ENCODE measurements at regions of chr3 and their contacts with region 1.

Region 1: GRCh38 chr3:20039766-20040475 is at the start of gene KAT2B:
- DNase-seq: peak; percentile 79 to 93 (median 91)
- ATAC-seq: peak; percentile 83
- H3K4me3 ChIP-seq: peak within 1 kb of the TSS; percentile 96
- H3K27ac ChIP-seq: peak within 1 kb of the TSS; percentile 95
- H3K4me1 ChIP-seq: peaks cover 7% of the 10 kb centered on the region
- H3K27me3 ChIP-seq: no peaks in the 10 kb centered on the region
- total RNA-seq, gene KAT2B: 58.2 to 71.5 (median 71.1) TPM

Region 2: GRCh38 chr3:19866751-19867347 is 173.1 kb before region 1 on chr3:
- intact Hi-C with region 1: no loop called
- DNase-seq: no peak
- ATAC-seq: peak; percentile 22 to 50
- H3K4me3 ChIP-seq: no peak overlapping the region
- H3K27ac ChIP-seq: no peak overlapping the region
- H3K4me1 ChIP-seq: no peaks in the 10 kb centered on the region
- H3K27me3 ChIP-seq: no peaks in the 10 kb centered on the region

Region 3: GRCh38 chr3:19946832-19947548 is 92.9 kb before region 1 on chr3 and contains the start of gene RAB5A:
- intact Hi-C with region 1: loop called in 2 of 4 experiments (anchors 5 to 10 kb)
- DNase-seq: peak; percentile 98 to 99 (median 99)
- ATAC-seq: peak; percentile 99
- H3K4me3 ChIP-seq: peak within 1 kb of the TSS; percentile 84
- H3K27ac ChIP-seq: peak within 1 kb of the TSS; percentile 92
- H3K4me1 ChIP-seq: no peaks in the 10 kb centered on the region
- H3K27me3 ChIP-seq: no peaks in the 10 kb centered on the region
- total RNA-seq, gene RAB5A: 45.2 to 71.3 (median 47.9) TPM

Region 4: DNA sequence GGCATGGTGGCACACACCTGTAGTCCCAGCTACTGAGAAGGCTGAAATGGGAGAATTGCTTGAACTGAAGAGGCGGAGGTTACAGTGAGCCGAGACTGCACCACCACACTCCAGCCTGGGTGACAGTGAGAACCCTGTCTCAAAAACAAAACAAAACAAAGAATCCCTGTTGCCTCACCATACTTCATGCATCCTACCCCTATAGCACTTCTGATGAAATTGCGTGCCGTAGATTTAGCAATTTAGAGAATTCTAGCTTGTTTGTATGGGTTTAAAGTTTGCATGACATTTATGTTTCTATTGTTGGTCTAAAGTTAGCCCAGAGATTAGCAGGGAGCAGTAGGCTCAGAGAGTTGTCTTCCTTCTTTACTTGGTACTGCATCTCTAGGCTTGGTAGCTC is 85.2 kb before region 1 on chr3:
- intact Hi-C with region 1: loop called in 2 of 4 experiments (anchors 5 to 10 kb)
- DNase-seq: no peak
- ATAC-seq: no peak
- H3K4me3 ChIP-seq: no peak overlapping the region
- H3K27ac ChIP-seq: no peak overlapping the region
- H3K4me1 ChIP-seq: peaks cover 8% of the 10 kb centered on the region
- H3K27me3 ChIP-seq: no peaks in the 10 kb centered on the region

Region 5: GRCh38 chr3:20185701-20186598 is 146.0 kb after region 1 on chr3 and contains the start of gene SGO1:
- intact Hi-C with region 1: loop called in 2 of 4 experiments (anchors 5 to 10 kb)
- DNase-seq: peak; percentile 99 to 100 (median 100)
- ATAC-seq: peak; percentile 100
- H3K4me3 ChIP-seq: peak within 1 kb of the TSS; percentile 62
- H3K27ac ChIP-seq: peak within 1 kb of the TSS; percentile 81
- H3K4me1 ChIP-seq: no peaks in the 10 kb centered on the region
- H3K27me3 ChIP-seq: no peaks in the 10 kb centered on the region
- total RNA-seq, gene SGO1: 0.20 to 0.43 (median 0.24) TPM

Region 6: DNA sequence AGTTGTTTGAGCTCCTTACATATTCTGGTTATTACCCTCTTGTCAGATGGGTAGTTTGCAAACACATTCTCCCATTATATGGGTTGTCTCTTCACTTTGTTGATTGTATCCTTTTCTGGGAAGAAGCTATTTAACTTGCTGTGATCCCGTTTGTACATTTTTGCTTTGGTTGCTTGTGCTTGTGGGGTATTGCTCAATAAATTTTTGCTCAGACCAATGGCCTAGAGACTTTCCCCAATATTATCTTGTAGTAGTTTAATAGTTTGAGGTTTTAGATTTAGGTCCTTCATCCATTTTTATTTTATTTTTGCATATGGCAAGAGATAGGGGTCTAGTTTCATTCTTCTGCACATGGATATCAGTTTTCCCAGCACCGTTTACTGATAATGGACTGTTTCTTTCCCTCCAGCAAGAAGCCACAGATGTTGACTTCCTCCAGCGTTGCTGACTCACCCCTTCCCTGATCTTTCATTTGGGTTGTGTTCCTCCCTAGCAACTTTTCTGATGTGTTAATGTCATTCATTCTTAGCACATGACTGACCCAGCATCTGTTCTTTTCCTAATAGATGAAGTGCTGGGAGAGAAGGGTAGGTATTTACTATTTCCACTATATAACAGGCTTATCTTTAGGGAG is 312.7 kb after region 1 on chr3:
- intact Hi-C with region 1: no loop called
- DNase-seq: no peak
- ATAC-seq: no peak
- H3K4me3 ChIP-seq: no peak overlapping the region
- H3K27ac ChIP-seq: no peak overlapping the region
- H3K4me1 ChIP-seq: no peaks in the 10 kb centered on the region
- H3K27me3 ChIP-seq: no peaks in the 10 kb centered on the region

Region 7: GRCh38 chr3:20401253-20401652 is 361.3 kb after region 1 on chr3:
- intact Hi-C with region 1: no loop called
- DNase-seq: no peak
- ATAC-seq: no peak
- H3K4me3 ChIP-seq: no peak overlapping the region
- H3K27ac ChIP-seq: no peak overlapping the region
- H3K4me1 ChIP-seq: no peaks in the 10 kb centered on the region
- H3K27me3 ChIP-seq: no peaks in the 10 kb centered on the region